CD4-positive, alpha-beta T cell (primary cell): ENCODE measurements at regions of chr1 and their contacts with region 1.

Region 1: DNA sequence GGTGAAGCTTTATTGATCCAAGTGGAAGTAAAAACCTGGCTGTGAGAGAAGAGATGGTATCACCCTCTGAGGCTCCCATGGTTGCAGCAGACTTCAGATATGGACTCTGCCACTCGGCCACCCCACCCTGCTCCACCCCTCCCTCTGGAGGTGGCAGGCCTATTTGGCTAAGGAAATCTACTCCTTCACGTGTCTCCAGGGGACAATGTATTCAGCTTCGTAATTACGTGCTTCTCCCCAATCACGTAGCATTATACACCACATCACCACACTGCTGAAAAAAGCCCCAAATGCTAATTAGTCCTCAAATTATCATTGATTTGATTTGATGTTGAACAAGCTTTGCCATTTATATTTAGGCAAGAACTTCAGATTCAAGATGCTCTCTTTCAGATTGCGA is 220.7 kb downstream of the OMA1 start:
- DNase-seq: no peak
- ATAC-seq: no peak
- H3K4me3 ChIP-seq: no peak overlapping the region
- H3K4me3 Mint-ChIP-seq: no peak overlapping the region
- H3K27ac ChIP-seq: no peak overlapping the region
- H3K27ac Mint-ChIP-seq: peak overlapping the region; percentile 64
- H3K4me1 ChIP-seq: peaks cover 7% of the 10 kb centered on the region
- H3K4me1 Mint-ChIP-seq: peaks cover 22% of the 10 kb centered on the region
- H3K27me3 ChIP-seq: no peaks in the 10 kb centered on the region
- H3K27me3 Mint-ChIP-seq: no peaks in the 10 kb centered on the region
- CTCF ChIP-seq: no peak

Region 2: GRCh38 chr1:58352476-58353092 is 26.7 kb after region 1 on chr1:
- CTCF ChIA-PET with region 1: no interaction called
- POLR2A ChIA-PET with region 1: no interaction called
- intact Hi-C with region 1: loop called in 1 of 2 experiments (anchors 1 kb)
- DNase-seq: no peak
- ATAC-seq: no peak
- H3K4me3 ChIP-seq: no peak overlapping the region
- H3K4me3 Mint-ChIP-seq: no peak overlapping the region
- H3K27ac ChIP-seq: no peak overlapping the region
- H3K27ac Mint-ChIP-seq: no peak overlapping the region
- H3K4me1 ChIP-seq: no peaks in the 10 kb centered on the region
- H3K4me1 Mint-ChIP-seq: no peaks in the 10 kb centered on the region
- H3K27me3 ChIP-seq: no peaks in the 10 kb centered on the region
- H3K27me3 Mint-ChIP-seq: no peaks in the 10 kb centered on the region
- CTCF ChIP-seq: no peak